Mammary epithelial cell (primary cell): ENCODE measurements at regions of chr19 and their contacts with region 1.

Region 1: DNA sequence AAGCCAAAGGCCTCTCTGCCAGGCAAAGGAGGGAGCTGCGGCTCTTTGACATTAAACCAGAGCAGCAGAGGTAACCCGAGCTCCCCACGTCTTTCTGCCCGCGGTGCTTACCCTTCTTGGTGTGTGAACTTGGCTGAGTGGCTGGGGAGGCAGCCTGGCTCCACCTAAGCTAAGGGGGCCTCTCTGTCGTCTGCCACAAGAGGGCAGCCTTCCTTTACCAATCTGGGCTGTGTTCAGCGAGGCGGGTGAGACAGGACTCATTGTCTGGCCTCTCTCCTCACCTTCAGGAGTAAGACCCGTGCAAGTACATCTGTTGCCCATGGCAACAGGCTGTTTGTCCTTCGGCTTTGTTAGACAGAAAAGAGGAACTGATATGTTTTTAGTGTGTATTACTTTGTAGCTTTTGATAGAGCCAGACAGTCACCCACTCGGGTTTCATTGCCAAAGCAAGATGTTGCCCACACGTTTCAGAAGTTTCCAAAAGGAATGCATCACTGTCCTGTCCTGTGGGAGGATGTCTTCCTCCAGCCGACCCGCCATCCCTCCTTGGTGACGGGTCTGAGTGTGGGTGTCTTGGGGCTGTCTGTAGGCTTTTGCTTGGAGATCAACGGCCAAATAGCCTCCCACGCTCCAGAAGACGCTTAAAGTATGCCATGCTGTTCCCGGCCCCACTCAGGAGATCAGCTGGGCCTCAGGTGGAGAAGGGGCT is 4.6 kb downstream of the POP4 start:
- DNase-seq: peak; percentile 70
- H3K4me3 ChIP-seq: no peak overlapping the region
- H3K27ac ChIP-seq: no peak overlapping the region
- H3K4me1 ChIP-seq: peaks cover 6% of the 10 kb centered on the region
- H3K27me3 ChIP-seq: no peaks in the 10 kb centered on the region
- CTCF ChIP-seq: peak; percentile 87 to 96

Region 2: GRCh38 chr19:29467824-29468401 is 142.8 kb before region 1 on chr19:
- CTCF ChIA-PET with region 1: no interaction called
- dilution Hi-C with region 1: no loop called
- in situ Hi-C with region 1: no loop called
- intact Hi-C with region 1: loop called (anchors 10 kb)
- DNase-seq: peak; percentile 4
- H3K4me3 ChIP-seq: no peak overlapping the region
- H3K27ac ChIP-seq: no peak overlapping the region
- H3K4me1 ChIP-seq: no peaks in the 10 kb centered on the region
- H3K27me3 ChIP-seq: no peaks in the 10 kb centered on the region
- CTCF ChIP-seq: peak; percentile 7 to 29

Region 3: DNA sequence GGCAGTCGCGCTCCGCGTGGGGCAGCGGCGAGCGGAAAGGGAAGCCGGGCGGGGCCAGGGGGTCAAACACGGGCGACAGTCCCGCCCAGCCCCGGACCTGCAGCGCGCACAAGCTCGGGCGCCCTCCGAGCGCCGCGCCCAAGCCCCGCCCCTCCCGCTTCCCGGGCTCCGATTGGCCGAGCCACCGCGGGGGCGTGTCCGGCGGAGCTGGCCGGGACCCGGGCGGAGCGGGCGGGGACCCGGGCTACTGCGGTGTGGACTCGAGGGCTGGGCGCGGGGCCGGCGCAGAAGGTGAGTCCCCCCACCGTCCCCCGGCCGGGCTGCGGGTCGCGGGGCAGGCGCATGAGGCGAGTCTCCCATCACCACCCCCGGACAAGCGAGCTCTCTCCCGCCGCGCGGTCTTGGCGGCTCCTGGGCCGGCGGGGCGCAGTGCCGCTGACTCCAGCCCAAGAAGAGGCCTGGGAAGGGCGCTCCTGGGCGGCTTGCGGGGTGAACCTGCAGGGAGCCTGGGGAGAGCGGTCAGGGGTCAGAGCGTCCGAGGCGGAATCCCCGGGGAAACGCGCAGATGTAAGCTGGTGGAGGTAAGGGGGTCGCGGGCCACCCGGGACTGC is 54.6 kb after region 1 on chr19 and contains the start of gene PLEKHF1:
- CTCF ChIA-PET with region 1: interaction called, 9 read pairs
- dilution Hi-C with region 1: no loop called
- in situ Hi-C with region 1: loop called in 1 of 2 experiments (anchors 5 kb)
- intact Hi-C with region 1: loop called (anchors 1 kb)
- DNase-seq: peak; percentile 78
- H3K4me3 ChIP-seq: peak within 1 kb of the TSS; percentile 76 to 79 (median 79)
- H3K27ac ChIP-seq: peak within 1 kb of the TSS; percentile 72
- H3K4me1 ChIP-seq: peaks cover 58% of the 10 kb centered on the region
- H3K27me3 ChIP-seq: no peaks in the 10 kb centered on the region
- CTCF ChIP-seq: no peak
- total RNA-seq, gene PLEKHF1: 20.6 to 31.2 TPM

Region 4: DNA sequence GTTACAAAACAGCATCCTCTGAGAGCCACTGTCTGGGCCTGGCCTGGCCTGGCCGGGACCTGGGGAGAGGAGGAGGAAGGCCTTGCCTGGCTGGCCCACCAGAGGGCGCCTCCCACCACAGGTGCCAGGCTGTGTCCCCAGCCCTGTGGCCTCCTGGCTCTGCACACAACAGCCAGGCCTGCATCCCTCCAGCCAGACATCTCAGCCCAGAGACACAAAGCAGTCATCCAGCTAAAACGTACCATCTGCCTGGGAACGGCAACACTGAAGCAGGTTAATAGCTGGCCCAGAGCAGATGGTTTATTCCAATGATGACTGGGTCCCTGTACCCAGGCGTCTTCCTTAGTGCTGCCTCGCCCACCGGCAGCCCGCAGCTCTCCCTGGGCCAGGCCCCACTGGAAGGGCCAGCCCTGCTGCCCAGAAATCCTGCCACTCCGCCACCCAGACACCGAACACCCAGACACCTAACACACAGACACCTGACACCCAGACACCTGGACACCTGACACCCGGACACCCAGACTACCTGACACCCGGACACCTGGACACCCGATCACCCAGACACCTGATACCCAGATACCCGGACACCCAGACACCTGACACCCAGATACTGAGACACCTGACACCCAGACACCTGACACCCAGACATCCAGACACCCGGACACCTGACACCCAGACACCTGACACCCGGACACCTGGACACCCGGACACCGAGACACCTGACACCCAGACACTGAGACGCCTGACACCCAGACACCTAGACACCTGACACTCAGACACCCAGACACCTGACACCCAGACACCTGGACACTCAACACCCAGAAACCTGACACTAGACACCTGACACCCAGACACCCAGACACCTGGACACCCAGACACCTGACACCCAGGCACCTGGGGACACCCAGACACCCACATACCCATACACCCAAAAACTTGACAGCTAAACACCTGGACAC is 84.2 kb after region 1 on chr19:
- CTCF ChIA-PET with region 1: no interaction called
- dilution Hi-C with region 1: no loop called
- in situ Hi-C with region 1: no loop called
- intact Hi-C with region 1: loop called (anchors 1 kb)
- DNase-seq: peak; percentile 26
- H3K4me3 ChIP-seq: no peak overlapping the region
- H3K27ac ChIP-seq: no peak overlapping the region
- H3K4me1 ChIP-seq: no peaks in the 10 kb centered on the region
- H3K27me3 ChIP-seq: no peaks in the 10 kb centered on the region
- CTCF ChIP-seq: peak; percentile 75 to 84

Region 5: DNA sequence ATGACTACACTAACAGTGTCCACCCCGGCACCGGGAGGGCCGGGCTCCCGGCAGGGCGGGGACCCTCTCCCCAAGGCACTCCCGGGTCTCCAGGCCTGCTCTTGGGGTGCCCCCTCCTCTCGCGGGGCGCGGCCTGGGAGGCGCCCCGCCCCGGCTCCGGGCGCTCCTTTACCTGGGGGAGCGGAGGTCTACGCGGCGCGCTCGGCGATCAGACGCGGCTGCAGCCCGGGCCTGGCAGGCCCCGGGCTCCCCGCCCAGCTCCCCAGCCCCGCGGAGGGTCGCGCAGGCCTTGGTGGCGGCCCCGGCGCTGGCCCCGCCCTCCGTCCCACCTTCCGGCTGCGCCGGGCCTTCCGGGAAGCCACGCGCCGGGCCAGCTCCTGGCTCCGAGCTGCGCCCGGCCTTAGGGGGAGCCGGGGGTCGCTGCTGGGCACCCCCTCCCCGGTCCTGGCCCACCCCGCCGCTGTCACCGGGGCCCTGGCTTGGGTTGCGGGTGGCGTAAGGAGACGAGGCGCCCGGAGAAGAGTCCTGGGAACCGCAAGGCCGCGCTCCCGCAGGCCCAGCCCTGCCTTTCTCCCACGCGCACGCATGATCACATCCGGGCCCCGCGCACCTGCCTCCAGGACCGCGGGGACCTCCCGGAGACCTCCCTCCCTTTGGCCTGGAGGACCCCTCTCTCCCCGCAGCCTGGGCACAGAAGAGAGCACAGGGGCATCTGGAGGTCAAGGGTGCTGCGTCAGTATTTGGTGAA is 104.4 kb after region 1 on chr19 and contains the start of gene C19orf12:
- CTCF ChIA-PET with region 1: no interaction called
- dilution Hi-C with region 1: loop called (anchors 5 kb)
- in situ Hi-C with region 1: loop called in 1 of 2 experiments (anchors 10 kb)
- intact Hi-C with region 1: loop called (anchors 1 kb)
- DNase-seq: peak; percentile 38
- H3K4me3 ChIP-seq: peak within 1 kb of the TSS; percentile 81 to 97 (median 87)
- H3K27ac ChIP-seq: peak within 1 kb of the TSS; percentile 71
- H3K4me1 ChIP-seq: peaks cover 3% of the 10 kb centered on the region
- H3K27me3 ChIP-seq: no peaks in the 10 kb centered on the region
- CTCF ChIP-seq: no peak
- total RNA-seq, gene C19orf12: 19.6 to 24.5 TPM

Region 6: GRCh38 chr19:31451686-31452330 is 1841.1 kb after region 1 on chr19:
- CTCF ChIA-PET with region 1: no interaction called
- dilution Hi-C with region 1: no loop called
- in situ Hi-C with region 1: no loop called
- intact Hi-C with region 1: no loop called
- DNase-seq: peak; percentile 84
- H3K4me3 ChIP-seq: no peak overlapping the region
- H3K27ac ChIP-seq: peak overlapping the region; percentile 39
- H3K4me1 ChIP-seq: peaks cover 21% of the 10 kb centered on the region
- H3K27me3 ChIP-seq: no peaks in the 10 kb centered on the region
- CTCF ChIP-seq: no peak